AG04450 (cell line): ENCODE measurements at regions of chr18 and their contacts with region 1.

Region 1: GRCh38 chr18:42028247-42028832 is 73.3 kb downstream of the PIK3C3 start:
- DNase-seq: no peak
- H3K4me3 ChIP-seq: no peak overlapping the region
- H3K27ac ChIP-seq: no peak overlapping the region
- H3K27me3 ChIP-seq: no peaks in the 10 kb centered on the region
- CTCF ChIP-seq: peak; percentile 93

Region 2: DNA sequence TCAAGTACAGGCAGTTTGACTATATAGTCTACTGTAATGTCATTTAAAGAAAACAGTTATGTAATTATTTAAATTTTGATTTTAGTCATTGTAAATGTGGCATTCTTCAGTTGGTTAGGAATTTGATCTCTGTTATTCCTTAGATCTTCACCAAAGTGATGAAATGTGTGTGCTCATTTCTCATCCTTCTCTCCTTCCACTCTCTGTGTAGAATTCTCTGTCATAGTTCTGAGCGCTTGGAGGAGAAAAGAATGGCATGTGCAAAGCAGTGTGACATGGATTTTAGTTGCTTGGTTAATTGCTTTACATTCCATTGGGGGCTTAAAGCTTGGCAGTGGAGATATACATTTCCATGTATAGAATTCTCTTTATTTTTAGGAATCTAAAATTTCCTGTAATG is 58.5 kb before region 1 on chr18:
- CTCF ChIA-PET with region 1: interaction called, 15 read pairs
- POLR2A ChIA-PET with region 1: no interaction called
- DNase-seq: no peak
- H3K4me3 ChIP-seq: no peak overlapping the region
- H3K27ac ChIP-seq: no peak overlapping the region
- H3K27me3 ChIP-seq: no peaks in the 10 kb centered on the region
- CTCF ChIP-seq: no peak

Region 3: DNA sequence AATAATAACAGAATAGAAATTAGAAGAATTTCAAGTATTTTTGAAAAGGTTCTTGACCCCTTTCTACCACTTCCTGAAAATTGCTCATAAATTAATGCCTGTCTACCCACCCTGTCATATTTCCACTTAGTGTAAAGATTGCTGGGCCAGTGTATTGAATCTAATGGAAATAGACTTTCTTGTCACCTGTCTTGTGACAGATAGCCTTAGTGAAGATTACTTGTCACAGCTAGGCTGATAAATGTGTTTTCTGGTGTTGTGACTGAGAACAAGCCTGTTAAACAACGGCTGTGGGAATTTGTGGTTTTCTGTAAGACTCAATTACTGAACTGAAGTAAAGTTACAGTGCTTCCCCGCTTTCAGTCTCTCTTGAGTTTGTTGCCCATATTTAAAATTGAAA is 36.3 kb before region 1 on chr18:
- CTCF ChIA-PET with region 1: interaction called, 24 read pairs
- POLR2A ChIA-PET with region 1: no interaction called
- DNase-seq: no peak
- H3K4me3 ChIP-seq: no peak overlapping the region
- H3K27ac ChIP-seq: no peak overlapping the region
- H3K27me3 ChIP-seq: no peaks in the 10 kb centered on the region
- CTCF ChIP-seq: no peak

Region 4: DNA sequence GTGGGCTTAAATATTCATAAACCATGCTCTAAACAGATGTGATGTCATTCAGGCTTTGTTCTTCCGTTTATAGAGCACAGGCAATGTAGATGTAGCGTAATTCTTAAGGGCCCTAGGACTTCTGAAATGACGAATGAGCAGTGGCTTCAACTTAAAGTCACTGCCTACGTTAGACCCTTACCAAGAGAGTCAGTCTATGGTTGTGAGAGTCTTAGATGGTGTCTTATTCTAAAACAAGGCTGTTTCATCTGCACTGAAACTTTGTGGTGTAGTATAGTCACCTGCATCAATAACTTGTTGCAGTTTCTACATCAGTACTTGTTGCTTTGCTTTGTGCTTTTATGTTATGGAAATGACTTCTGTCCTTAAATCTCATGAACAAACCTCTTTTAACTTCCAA is 17.3 kb before region 1 on chr18:
- CTCF ChIA-PET with region 1: interaction called, 166 read pairs
- POLR2A ChIA-PET with region 1: no interaction called
- DNase-seq: no peak
- H3K4me3 ChIP-seq: no peak overlapping the region
- H3K27ac ChIP-seq: no peak overlapping the region
- H3K27me3 ChIP-seq: no peaks in the 10 kb centered on the region
- CTCF ChIP-seq: no peak

Region 5: DNA sequence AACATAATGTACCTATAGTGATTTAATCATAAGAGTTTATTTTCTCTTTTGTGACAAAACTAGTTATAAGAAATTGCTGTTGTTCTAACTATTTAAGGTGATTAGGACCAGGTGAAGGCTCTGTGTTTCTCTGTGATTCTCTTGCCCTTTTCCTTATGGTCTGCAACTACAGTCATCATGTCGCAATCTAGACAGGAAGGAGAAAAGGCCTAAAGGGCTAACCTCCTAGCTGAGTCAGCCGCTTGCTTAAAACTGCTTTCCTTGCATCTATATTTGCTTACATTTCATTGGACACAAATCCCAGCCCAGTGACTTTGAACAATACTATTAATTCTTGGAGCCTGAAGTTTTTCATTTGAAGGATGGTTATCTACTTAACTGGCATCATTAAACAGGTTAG is 19.8 kb after region 1 on chr18:
- CTCF ChIA-PET with region 1: interaction called, 129 read pairs
- POLR2A ChIA-PET with region 1: no interaction called
- DNase-seq: peak; percentile 55
- H3K4me3 ChIP-seq: no peak overlapping the region
- H3K27ac ChIP-seq: no peak overlapping the region
- H3K27me3 ChIP-seq: no peaks in the 10 kb centered on the region
- CTCF ChIP-seq: no peak